ENCODE measurements at regions of chr18 and their contacts with region 1.

Region 1: DNA sequence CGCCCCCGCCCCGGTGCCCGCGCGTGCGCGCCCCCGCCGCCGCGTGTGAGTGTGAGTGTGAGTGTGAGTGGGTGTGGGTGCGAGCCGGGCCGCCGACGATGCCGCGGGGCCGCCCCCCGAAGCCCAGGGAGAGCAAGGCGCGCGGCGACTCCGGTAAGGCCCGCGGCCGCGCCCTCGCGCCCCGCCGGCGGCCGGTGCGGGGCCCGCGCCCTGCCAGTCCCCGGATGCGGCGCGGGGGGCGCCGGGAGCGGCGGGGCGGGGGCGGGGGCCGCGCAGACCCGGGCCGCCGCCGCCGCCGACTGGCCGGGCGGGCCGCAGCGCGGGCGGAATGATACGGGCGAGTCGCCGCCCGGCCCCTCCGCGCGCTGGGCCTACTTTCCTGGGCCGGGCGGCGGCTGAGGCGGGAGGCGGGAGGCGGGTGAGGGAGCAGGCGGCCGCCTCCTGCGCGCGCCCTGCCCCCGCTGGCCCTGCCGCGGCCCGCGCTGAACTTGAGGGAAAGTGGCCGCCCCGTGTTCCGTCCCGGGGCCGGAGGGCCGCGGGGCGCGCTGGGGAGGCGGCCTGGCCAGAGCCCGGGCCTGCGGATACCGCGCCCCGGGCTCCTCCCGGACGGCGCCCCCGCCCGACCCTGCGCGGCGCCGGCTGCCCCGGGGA is at the start of gene ZNF236:
- DNase-seq: peak; percentile 44
- H3K4me3 ChIP-seq: peak within 1 kb of the TSS; percentile 54 to 98 (median 75)
- H3K27ac ChIP-seq: peak within 1 kb of the TSS; percentile 63
- H3K4me1 ChIP-seq: peaks cover 25% of the 10 kb centered on the region
- H3K27me3 ChIP-seq: no peaks in the 10 kb centered on the region
- CTCF ChIP-seq: no peak
- POLR2A ChIP-seq: peak; percentile 73
- total RNA-seq, gene ZNF236: 13.6 and 14.7 TPM in 2 replicates

Region 2: DNA sequence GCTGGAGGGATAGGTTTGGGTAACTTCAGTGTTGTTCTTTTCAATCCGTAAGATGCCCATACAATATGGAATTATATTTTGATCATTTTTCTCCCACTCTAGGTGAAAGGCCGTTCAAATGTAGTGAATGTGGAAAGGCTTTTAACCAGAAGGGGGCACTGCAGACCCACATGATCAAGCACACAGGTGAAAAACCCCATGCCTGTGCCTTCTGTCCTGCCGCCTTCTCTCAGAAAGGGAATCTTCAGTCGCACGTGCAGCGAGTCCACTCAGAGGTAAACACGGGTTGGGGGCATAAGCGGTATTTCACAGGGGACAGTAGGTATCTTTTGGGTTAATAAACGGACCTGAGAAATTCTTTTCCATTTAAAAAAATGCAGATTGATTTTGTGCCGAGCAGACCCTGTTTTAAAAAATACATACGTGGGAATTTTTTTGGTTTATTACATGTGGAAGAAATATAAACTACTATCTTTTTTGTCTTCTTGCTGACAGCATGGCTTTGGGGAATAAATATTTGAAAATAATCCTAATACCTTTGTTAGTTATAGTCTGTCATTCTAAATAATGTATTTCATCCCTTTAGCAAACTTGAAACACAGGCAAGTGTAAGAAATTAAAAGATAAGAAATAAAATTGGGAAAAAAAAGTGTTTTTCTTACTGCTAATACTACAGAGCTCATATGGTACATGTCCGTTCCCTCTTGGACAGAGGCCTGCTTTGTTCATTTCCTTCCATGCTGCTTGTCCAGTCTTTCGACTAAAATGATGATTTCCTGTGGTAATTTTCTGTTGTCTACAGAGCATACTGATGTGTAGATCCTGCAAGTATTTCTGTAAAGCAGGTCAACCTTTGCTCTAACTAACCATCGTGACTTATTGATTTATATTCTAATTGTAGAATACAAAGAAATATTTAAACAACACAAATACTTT is 53.0 kb after region 1 on chr18:
- CTCF ChIA-PET with region 1: interaction called, 5 read pairs
- POLR2A ChIA-PET with region 1: no interaction called
- dilution Hi-C with region 1: no loop called
- intact Hi-C with region 1: loop called (anchors 5 kb)
- DNase-seq: peak; percentile 52
- H3K4me3 ChIP-seq: no peak overlapping the region
- H3K27ac ChIP-seq: no peak overlapping the region
- H3K4me1 ChIP-seq: no peaks in the 10 kb centered on the region
- H3K27me3 ChIP-seq: no peaks in the 10 kb centered on the region
- CTCF ChIP-seq: peak; percentile 63
- POLR2A ChIP-seq: no peak

Region 3: DNA sequence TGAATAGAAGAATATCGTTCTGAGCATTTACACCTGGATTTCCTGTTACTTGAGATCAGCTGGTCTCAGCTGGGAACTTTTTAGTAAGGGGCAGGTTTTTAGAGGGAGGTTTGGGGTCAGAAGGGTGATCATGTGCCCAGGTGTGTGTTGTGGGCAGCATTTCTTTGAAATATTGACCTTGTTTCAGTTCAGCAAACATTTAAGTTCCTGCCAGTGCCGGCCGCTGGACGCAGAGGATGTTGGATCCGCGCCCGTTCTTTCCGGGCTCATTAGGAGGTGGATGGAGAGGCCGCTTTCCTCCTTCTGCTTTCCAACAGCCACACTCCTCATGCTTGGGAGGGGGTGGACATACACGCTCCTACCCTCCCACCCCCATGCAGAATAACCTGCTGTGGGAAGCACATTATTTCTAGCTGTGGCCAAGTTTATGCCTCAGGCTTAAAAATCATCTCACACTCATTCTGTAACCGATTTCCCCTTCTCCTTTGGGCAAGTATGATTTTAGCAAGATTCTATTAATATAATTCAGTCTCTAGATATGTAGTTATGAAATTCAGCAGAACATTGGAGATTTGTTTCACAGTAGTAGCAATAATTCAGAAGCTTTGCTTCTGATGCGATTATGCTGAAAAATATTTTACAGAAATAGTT is 131.1 kb after region 1 on chr18:
- CTCF ChIA-PET with region 1: no interaction called
- POLR2A ChIA-PET with region 1: no interaction called
- dilution Hi-C with region 1: no loop called
- intact Hi-C with region 1: loop called (anchors 10 kb)
- DNase-seq: peak; percentile 76
- H3K4me3 ChIP-seq: no peak overlapping the region
- H3K27ac ChIP-seq: no peak overlapping the region
- H3K4me1 ChIP-seq: peaks cover 12% of the 10 kb centered on the region
- H3K27me3 ChIP-seq: no peaks in the 10 kb centered on the region
- CTCF ChIP-seq: no peak
- POLR2A ChIP-seq: no peak

Measured in endothelial cell of umbilical vein (primary cell).